ENCODE measurements at regions of chr11 and their contacts with region 1.

Region 1: DNA sequence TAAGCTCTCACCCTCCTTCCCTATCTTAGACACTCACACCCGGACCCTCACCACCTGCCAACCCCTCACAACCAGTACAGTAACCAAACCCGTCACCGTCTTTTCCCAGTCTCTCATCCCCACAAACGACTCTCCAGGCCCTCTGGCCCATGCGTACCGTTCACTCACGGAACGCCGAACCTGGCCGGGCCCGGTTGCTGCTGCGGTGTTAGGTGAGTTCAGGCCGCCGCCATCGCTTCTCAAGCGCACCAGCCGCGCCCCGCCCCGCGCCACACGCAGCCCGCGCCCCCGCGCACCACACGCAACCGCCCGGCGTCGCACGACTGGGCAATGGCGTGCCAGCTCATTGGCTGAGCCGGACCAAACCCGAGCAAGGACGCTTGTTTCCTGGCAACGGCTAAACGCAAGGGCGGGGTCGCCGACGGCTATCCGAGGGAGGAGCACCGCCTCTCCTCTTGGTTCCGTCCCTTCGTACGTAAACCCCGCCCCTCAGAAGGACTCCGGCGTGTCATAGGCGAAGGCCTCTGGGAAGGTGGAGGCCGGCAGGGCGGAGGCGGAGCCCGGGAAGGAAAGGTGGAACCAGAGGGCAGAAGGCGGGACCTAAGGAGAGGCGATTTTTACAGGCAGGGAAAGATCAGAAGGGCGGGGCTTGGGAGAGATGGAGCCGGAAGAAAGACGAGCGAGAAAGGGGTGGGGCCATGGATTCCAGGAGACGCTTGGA is at the start of gene FHIP1B:
- H3K4me3 Mint-ChIP-seq: peak within 1 kb of the TSS; percentile 96
- H3K27ac Mint-ChIP-seq: peak within 1 kb of the TSS; percentile 95
- H3K4me1 Mint-ChIP-seq: peaks cover 57% of the 10 kb centered on the region
- H3K27me3 Mint-ChIP-seq: no peaks in the 10 kb centered on the region

Region 2: DNA sequence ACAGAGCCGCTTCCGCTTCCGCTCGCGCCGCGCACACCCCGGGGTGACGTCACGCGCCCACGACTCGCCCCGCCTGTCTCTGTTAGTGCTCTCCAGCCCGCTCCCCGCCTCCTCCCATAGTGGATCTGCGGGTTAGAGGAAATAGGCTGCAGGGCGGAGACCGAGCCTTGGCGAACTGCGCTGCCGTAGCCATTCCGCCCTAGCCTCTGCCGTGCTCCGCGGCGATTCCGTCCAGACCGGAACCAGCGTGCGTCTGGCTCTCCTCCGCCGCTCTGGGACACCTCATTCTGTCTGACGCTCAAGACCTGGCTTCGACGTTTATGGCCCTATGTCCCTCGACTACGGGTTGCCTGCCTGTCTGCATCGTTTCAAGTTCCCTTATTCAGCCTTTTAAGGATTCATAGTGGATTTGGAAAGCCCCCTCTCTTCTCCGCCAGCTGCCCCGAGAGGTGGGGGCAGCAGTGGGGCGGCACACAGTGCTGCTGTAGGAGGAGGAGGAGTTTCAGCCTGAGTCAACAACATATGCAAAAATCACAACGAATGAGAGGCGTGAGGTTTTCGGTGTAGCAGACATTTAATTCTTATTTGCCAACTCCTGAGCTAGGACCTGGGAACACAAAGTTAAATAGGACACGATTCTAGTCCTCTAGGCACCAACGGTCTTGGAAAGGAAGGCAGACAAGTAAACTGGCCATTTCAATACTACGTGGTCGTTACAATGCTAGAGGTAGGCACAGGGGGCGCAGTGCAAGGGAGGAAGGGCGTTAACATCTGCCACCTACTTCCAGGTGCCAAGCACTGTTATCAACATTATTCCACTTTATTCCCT is 377.9 kb after region 1 on chr11 and contains the start of gene TAF10:
- intact Hi-C with region 1: loop called (anchors 5 kb)
- H3K4me3 Mint-ChIP-seq: peak within 1 kb of the TSS; percentile 85
- H3K27ac Mint-ChIP-seq: no peak within 1 kb of the TSS
- H3K4me1 Mint-ChIP-seq: peaks cover 35% of the 10 kb centered on the region
- H3K27me3 Mint-ChIP-seq: no peaks in the 10 kb centered on the region

Measured in dendritic cell treated with granulocyte-macrophage colony-stimulating factor and Interleukin-4, amounts not matched to agents 40 ng/mL and 50 ng/mL, for 4 days (primary cell).